GM12878 (cell line): ENCODE measurements at regions of chr4 and their contacts with region 1.

Region 1: GRCh38 chr4:127394516-127394915 is 238.2 kb upstream of the INTU start:
- DNase-seq: no peak
- ATAC-seq: no peak
- H3K4me3 ChIP-seq: no peak overlapping the region
- H3K27ac ChIP-seq: no peak overlapping the region
- H3K4me1 ChIP-seq: no peaks in the 10 kb centered on the region
- H3K27me3 ChIP-seq: no peaks in the 10 kb centered on the region
- CTCF ChIP-seq: no peak
- EP300 ChIP-seq: no peak
- POLR2A ChIP-seq: no peak
- RAD21 ChIP-seq: no peak

Region 2: DNA sequence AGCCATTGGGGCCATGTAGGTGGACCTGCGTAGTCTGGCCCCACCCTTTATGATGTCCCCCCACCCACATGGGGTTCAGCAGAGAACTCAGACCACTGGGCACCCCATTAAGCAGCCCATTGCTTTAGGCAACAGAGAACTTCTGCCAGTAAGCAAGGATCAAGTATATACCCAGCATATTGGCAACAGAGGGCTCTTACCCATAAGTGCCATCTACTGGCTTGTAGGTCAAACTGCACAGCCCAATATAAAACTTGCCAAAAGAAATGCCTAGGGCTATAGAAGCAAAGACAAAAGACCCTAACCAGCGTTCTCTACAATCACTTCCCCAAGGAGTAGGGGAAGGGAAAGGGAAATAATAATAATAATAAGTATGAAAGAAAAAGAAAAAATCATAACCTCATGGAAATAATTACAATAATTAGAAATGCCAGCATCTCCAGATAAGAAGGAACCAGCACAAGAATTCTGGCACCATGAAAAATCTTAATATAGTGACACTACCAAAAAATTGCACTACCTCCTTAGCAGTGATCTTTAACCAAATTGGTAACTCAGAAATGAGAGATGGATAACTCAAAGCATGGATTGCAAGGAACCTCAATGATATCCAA is 989.0 kb before region 1 on chr4:
- CTCF ChIA-PET with region 1: no interaction called
- POLR2A ChIA-PET with region 1: no interaction called
- RAD21 ChIA-PET with region 1: no interaction called
- SMC1A ChIA-PET with region 1: no interaction called
- in situ Hi-C with region 1: no loop called
- intact Hi-C with region 1: loop called (anchors 10 kb)
- DNase-seq: no peak
- ATAC-seq: peak; percentile 94
- H3K4me3 ChIP-seq: no peak overlapping the region
- H3K27ac ChIP-seq: no peak overlapping the region
- H3K4me1 ChIP-seq: no peaks in the 10 kb centered on the region
- H3K27me3 ChIP-seq: no peaks in the 10 kb centered on the region
- CTCF ChIP-seq: peak; percentile 52 to 66 (median 56)
- EP300 ChIP-seq: no peak
- POLR2A ChIP-seq: no peak
- RAD21 ChIP-seq: peak; percentile 48; the same call in 1 of the 2 replicates

Region 3: GRCh38 chr4:127417886-127418535 is 23.5 kb after region 1 on chr4:
- CTCF ChIA-PET with region 1: no interaction called
- POLR2A ChIA-PET with region 1: no interaction called
- RAD21 ChIA-PET with region 1: no interaction called
- SMC1A ChIA-PET with region 1: no interaction called
- in situ Hi-C with region 1: no loop called
- intact Hi-C with region 1: no loop called
- DNase-seq: no peak
- ATAC-seq: no peak
- H3K4me3 ChIP-seq: no peak overlapping the region
- H3K27ac ChIP-seq: no peak overlapping the region
- H3K4me1 ChIP-seq: no peaks in the 10 kb centered on the region
- H3K27me3 ChIP-seq: no peaks in the 10 kb centered on the region
- CTCF ChIP-seq: no peak
- EP300 ChIP-seq: no peak
- POLR2A ChIP-seq: no peak
- RAD21 ChIP-seq: no peak